ENCODE measurements at regions of chr17 and their contacts with region 1.

Region 1: DNA sequence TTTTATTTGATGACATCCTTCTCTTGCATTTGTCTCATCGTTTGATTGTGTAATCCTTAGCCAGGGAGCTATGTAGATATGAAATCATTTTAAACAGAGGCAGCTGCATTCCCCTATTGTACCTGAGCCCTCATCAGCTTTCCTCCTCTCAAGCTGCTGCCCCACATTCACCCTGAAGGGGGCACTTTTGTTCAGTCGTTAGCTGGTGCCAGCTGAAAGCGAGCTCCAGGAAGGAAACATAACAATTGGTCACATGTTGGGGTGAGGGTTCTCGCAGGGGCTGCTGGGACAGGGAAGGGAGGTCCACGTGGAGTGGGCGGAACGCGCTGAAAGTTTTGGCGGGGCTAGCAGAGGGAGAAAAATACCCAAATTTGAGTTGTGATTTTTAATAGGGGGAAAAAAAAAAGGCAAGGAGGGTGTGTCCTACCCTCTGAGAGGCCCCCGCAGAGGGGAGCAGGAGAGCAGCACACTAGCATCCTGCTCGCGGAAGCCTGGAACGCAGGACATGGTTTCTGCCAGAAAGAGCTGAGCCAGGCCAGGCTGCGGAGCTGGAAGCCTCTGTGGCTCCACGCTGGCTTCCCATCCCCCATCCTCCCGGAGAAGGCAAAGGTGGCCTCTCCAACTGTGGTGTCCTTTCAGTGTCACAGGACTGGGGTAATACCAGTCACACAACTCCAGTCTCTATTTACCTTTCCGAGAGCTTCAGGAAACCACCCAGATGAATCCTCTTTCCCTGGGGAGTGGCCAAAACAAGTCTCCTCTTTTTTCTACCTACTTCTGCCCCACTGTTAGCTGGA is 8.5 kb upstream of the MSL1 start:
- DNase-seq: peak; percentile 100
- H3K4me3 Mint-ChIP-seq: peak overlapping the region; percentile 65
- H3K27ac Mint-ChIP-seq: peak overlapping the region; percentile 74
- H3K4me1 Mint-ChIP-seq: peaks cover 58% of the 10 kb centered on the region
- H3K27me3 Mint-ChIP-seq: no peaks in the 10 kb centered on the region
- CTCF ChIP-seq: no peak

Region 2: GRCh38 chr17:39547713-39548478 is 565.4 kb before region 1 on chr17:
- CTCF ChIA-PET with region 1: no interaction called
- intact Hi-C with region 1: no loop called
- DNase-seq: peak; percentile 96
- H3K4me3 Mint-ChIP-seq: no peak overlapping the region
- H3K27ac Mint-ChIP-seq: no peak overlapping the region
- H3K4me1 Mint-ChIP-seq: peaks cover 12% of the 10 kb centered on the region
- H3K27me3 Mint-ChIP-seq: no peaks in the 10 kb centered on the region
- CTCF ChIP-seq: peak; percentile 100

Region 3: GRCh38 chr17:39730095-39730921 is 383.0 kb before region 1 on chr17 and contains the start of gene MIEN1:
- CTCF ChIA-PET with region 1: interaction called, 19 read pairs
- intact Hi-C with region 1: no loop called
- DNase-seq: no peak
- H3K4me3 Mint-ChIP-seq: peak within 1 kb of the TSS; percentile 79
- H3K27ac Mint-ChIP-seq: peak within 1 kb of the TSS; percentile 90
- H3K4me1 Mint-ChIP-seq: peaks cover 34% of the 10 kb centered on the region
- H3K27me3 Mint-ChIP-seq: no peaks in the 10 kb centered on the region
- CTCF ChIP-seq: no peak
- total RNA-seq, gene MIEN1: 2,121 and 2,217 TPM in 2 replicates

Region 4: GRCh38 chr17:40015005-40015997 is 98.0 kb before region 1 on chr17 and contains the start of gene CSF3:
- CTCF ChIA-PET with region 1: interaction called, 181 read pairs
- intact Hi-C with region 1: loop called (anchors 1 kb)
- DNase-seq: peak; percentile 66
- H3K4me3 Mint-ChIP-seq: no peak within 1 kb of the TSS
- H3K27ac Mint-ChIP-seq: no peak within 1 kb of the TSS
- H3K4me1 Mint-ChIP-seq: peaks cover 10% of the 10 kb centered on the region
- H3K27me3 Mint-ChIP-seq: peaks cover 74% of the 10 kb centered on the region
- CTCF ChIP-seq: no peak
- total RNA-seq, gene CSF3: 0.38 TPM in 1 of 2 replicates, not detected in the other

Region 5: GRCh38 chr17:40086150-40087044 is 26.9 kb before region 1 on chr17:
- CTCF ChIA-PET with region 1: interaction called, 134 read pairs
- intact Hi-C with region 1: loop called (anchors 1 kb)
- DNase-seq: peak; percentile 100
- H3K4me3 Mint-ChIP-seq: no peak overlapping the region
- H3K27ac Mint-ChIP-seq: no peak overlapping the region
- H3K4me1 Mint-ChIP-seq: no peaks in the 10 kb centered on the region
- H3K27me3 Mint-ChIP-seq: no peaks in the 10 kb centered on the region
- CTCF ChIP-seq: no peak

Region 6: DNA sequence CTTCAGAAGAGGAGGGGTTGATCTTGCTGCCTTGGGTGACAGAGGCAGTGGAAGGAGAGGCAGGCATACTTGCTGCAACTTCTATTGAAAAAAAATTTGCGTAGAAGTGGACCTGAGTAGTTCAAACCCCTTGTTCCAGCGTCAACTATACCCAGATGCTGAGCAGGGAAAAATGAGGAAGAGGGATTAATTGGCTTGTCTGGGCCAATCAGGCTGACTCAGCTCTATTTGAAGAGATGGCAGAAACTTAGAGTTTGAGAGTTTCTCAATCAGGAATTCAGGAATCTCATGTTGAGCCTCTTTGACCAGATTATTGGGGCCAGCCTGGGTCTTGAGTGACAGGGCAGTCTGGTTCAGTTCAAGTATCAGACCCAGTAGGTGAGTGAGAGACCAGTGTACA is 44.7 kb after region 1 on chr17:
- CTCF ChIA-PET with region 1: interaction called, 86 read pairs
- intact Hi-C with region 1: no loop called
- DNase-seq: no peak
- H3K4me3 Mint-ChIP-seq: no peak overlapping the region
- H3K27ac Mint-ChIP-seq: no peak overlapping the region
- H3K4me1 Mint-ChIP-seq: no peaks in the 10 kb centered on the region
- H3K27me3 Mint-ChIP-seq: no peaks in the 10 kb centered on the region
- CTCF ChIP-seq: no peak

Region 7: GRCh38 chr17:40251576-40251975 is 138.3 kb after region 1 on chr17:
- CTCF ChIA-PET with region 1: no interaction called
- intact Hi-C with region 1: no loop called
- DNase-seq: no peak
- H3K4me3 Mint-ChIP-seq: no peak overlapping the region
- H3K27ac Mint-ChIP-seq: peak overlapping the region; percentile 10
- H3K4me1 Mint-ChIP-seq: peaks cover 30% of the 10 kb centered on the region
- H3K27me3 Mint-ChIP-seq: no peaks in the 10 kb centered on the region
- CTCF ChIP-seq: no peak

Region 8: GRCh38 chr17:40287494-40288369 is 174.4 kb after region 1 on chr17 and contains the start of gene CDC6:
- CTCF ChIA-PET with region 1: interaction called, 110 read pairs
- intact Hi-C with region 1: loop called (anchors 1 kb)
- DNase-seq: peak; percentile 100
- H3K4me3 Mint-ChIP-seq: peak within 1 kb of the TSS; percentile 83
- H3K27ac Mint-ChIP-seq: peak within 1 kb of the TSS; percentile 90
- H3K4me1 Mint-ChIP-seq: peaks cover 71% of the 10 kb centered on the region
- H3K27me3 Mint-ChIP-seq: no peaks in the 10 kb centered on the region
- CTCF ChIP-seq: no peak
- total RNA-seq, gene CDC6: 567 and 645 TPM in 2 replicates

Measured in Calu3 (cell line).